ENCODE measurements at regions of chr11 and their contacts with region 1.

Region 1: DNA sequence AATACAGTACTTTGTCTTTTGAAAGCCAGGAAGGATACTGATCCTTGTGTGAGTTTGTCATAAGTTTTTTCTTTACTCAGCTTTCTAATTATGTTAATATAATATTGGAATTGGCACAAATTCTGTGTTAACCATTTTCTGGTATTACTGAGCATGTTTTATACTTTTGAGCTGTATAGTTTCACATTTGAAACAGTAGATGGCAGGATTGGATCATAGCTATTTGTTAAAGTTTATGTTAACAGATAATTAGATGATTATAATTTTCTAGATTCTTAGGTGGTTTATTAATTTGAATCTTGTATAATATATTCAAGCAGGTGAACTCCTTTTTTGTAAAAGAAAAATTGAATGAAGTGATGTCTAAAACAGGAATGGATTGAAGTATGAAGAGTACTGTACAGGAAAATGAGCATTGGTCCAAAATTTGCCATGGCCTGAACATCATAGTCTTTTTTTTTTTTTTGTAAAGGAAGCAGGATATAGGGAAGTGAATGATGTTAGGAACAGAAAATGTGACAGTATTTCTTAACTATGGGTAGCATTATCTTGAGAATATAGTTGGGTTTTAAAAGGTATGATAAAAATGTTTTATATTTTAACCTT is 102.0 kb downstream of the CYP2R1 start:
- DNase-seq: peak in 1 of 2 experiments; percentile 4
- H3K4me3 ChIP-seq: no peak overlapping the region
- H3K4me3 Mint-ChIP-seq: no peak overlapping the region
- H3K27ac Mint-ChIP-seq: no peak overlapping the region
- H3K4me1 ChIP-seq: no peaks in the 10 kb centered on the region
- H3K4me1 Mint-ChIP-seq: peaks cover 7% of the 10 kb centered on the region
- H3K27me3 ChIP-seq: no peaks in the 10 kb centered on the region
- H3K27me3 Mint-ChIP-seq: no peaks in the 10 kb centered on the region
- CTCF ChIP-seq: peak in 1 of 2 experiments; percentile 29

Region 2: DNA sequence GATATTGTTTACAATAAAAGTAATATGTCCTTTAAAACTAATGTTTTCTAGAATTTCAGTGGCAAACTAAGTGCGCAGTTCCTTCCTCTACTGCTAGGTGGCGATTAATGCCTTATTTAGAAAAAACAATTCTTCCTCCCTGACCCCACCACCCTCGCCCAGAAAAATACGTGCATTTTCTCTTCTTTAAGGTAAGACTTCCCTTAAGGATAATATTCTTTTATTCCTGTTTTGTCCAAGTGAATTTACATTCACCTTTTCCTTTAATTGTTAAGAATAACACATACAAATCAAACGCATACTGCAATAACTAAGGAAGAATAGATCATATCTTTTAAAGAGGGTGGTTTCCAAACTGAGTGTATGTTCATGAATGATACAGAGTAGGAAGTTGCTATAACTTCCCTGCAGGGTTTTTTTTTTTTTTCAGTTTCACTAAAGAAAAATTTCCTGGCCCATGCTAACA is 252.8 kb before region 1 on chr11:
- CTCF ChIA-PET with region 1: no interaction called
- POLR2A ChIA-PET with region 1: no interaction called
- intact Hi-C with region 1: loop called (anchors 5 kb)
- DNase-seq: peak in 1 of 2 experiments; percentile 47
- H3K4me3 ChIP-seq: no peak overlapping the region
- H3K4me3 Mint-ChIP-seq: no peak overlapping the region
- H3K27ac Mint-ChIP-seq: no peak overlapping the region
- H3K4me1 ChIP-seq: no peaks in the 10 kb centered on the region
- H3K4me1 Mint-ChIP-seq: no peaks in the 10 kb centered on the region
- H3K27me3 ChIP-seq: no peaks in the 10 kb centered on the region
- H3K27me3 Mint-ChIP-seq: no peaks in the 10 kb centered on the region
- CTCF ChIP-seq: peak; percentile 66 to 79

Region 3: GRCh38 chr11:14756349-14756748 is 33.6 kb before region 1 on chr11:
- CTCF ChIA-PET with region 1: no interaction called
- POLR2A ChIA-PET with region 1: no interaction called
- intact Hi-C with region 1: no loop called
- DNase-seq: no peak
- H3K4me3 ChIP-seq: no peak overlapping the region
- H3K4me3 Mint-ChIP-seq: no peak overlapping the region
- H3K27ac Mint-ChIP-seq: no peak overlapping the region
- H3K4me1 ChIP-seq: peaks cover 10% of the 10 kb centered on the region
- H3K4me1 Mint-ChIP-seq: peaks cover 7% of the 10 kb centered on the region
- H3K27me3 ChIP-seq: no peaks in the 10 kb centered on the region
- H3K27me3 Mint-ChIP-seq: no peaks in the 10 kb centered on the region
- CTCF ChIP-seq: no peak

Region 4: GRCh38 chr11:14809466-14809865 is 19.5 kb after region 1 on chr11:
- CTCF ChIA-PET with region 1: no interaction called
- POLR2A ChIA-PET with region 1: no interaction called
- intact Hi-C with region 1: no loop called
- DNase-seq: no peak
- H3K4me3 ChIP-seq: no peak overlapping the region
- H3K4me3 Mint-ChIP-seq: no peak overlapping the region
- H3K27ac Mint-ChIP-seq: no peak overlapping the region
- H3K4me1 ChIP-seq: no peaks in the 10 kb centered on the region
- H3K4me1 Mint-ChIP-seq: no peaks in the 10 kb centered on the region
- H3K27me3 ChIP-seq: no peaks in the 10 kb centered on the region
- H3K27me3 Mint-ChIP-seq: no peaks in the 10 kb centered on the region
- CTCF ChIP-seq: no peak

Region 5: DNA sequence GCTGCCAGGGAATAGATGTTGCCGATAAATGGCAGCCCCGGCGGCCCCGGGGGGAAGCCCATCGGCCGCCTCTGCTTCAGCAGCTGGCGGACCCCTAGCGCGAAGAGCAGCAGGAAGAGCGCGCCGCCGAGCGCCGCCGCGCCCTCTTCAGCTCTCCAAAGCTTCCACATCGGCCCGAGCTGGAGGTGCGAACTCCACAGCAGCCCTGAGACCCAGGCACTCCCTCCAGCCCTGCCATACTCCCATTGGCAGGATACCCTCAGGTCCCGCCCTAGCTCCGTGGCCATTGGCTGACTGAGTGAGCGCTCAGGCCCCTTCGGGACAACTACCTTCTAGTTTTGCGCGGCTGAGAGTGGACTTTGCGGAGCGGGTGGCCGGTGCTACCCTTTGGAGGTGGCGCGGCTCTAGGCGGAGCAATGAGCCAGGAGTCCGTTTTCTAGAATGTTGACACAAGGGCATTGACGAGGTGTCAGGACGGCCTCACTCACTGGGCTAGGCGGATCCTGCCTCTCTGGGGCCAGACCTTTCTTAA is 102.1 kb after region 1 on chr11 and contains the start of gene CYP2R1:
- CTCF ChIA-PET with region 1: interaction called, 14 read pairs
- POLR2A ChIA-PET with region 1: no interaction called
- intact Hi-C with region 1: loop called (anchors 5 kb)
- DNase-seq: peak; percentile 99
- H3K4me3 ChIP-seq: peak within 1 kb of the TSS; percentile 78
- H3K4me3 Mint-ChIP-seq: peak within 1 kb of the TSS; percentile 99
- H3K27ac Mint-ChIP-seq: peak within 1 kb of the TSS; percentile 88
- H3K4me1 ChIP-seq: peaks cover 27% of the 10 kb centered on the region
- H3K4me1 Mint-ChIP-seq: peaks cover 26% of the 10 kb centered on the region
- H3K27me3 ChIP-seq: no peaks in the 10 kb centered on the region
- H3K27me3 Mint-ChIP-seq: no peaks in the 10 kb centered on the region
- CTCF ChIP-seq: no peak
- total RNA-seq, gene CYP2R1: 33.0 and 34.5 TPM in 2 replicates

Region 6: GRCh38 chr11:15006139-15006759 is 216.3 kb after region 1 on chr11:
- CTCF ChIA-PET with region 1: interaction called, 19 read pairs
- POLR2A ChIA-PET with region 1: no interaction called
- intact Hi-C with region 1: loop called (anchors 2 kb)
- DNase-seq: peak in 1 of 2 experiments; percentile 30
- H3K4me3 ChIP-seq: no peak overlapping the region
- H3K4me3 Mint-ChIP-seq: no peak overlapping the region
- H3K27ac Mint-ChIP-seq: no peak overlapping the region
- H3K4me1 ChIP-seq: no peaks in the 10 kb centered on the region
- H3K4me1 Mint-ChIP-seq: no peaks in the 10 kb centered on the region
- H3K27me3 ChIP-seq: no peaks in the 10 kb centered on the region; the same call in 1 of the 2 replicates
- H3K27me3 Mint-ChIP-seq: peaks cover 18% of the 10 kb centered on the region
- CTCF ChIP-seq: peak; percentile 58 to 62

Region 7: GRCh38 chr11:15074206-15075161 is 284.5 kb after region 1 on chr11:
- CTCF ChIA-PET with region 1: interaction called, 4 read pairs
- POLR2A ChIA-PET with region 1: no interaction called
- intact Hi-C with region 1: loop called (anchors 2 kb)
- DNase-seq: peak; percentile 83 to 86
- H3K4me3 ChIP-seq: no peak overlapping the region
- H3K4me3 Mint-ChIP-seq: peak overlapping the region; percentile 67
- H3K27ac Mint-ChIP-seq: no peak overlapping the region
- H3K4me1 ChIP-seq: no peaks in the 10 kb centered on the region
- H3K4me1 Mint-ChIP-seq: no peaks in the 10 kb centered on the region
- H3K27me3 ChIP-seq: peaks cover 1% of the 10 kb centered on the region; the same call in 1 of the 2 replicates
- H3K27me3 Mint-ChIP-seq: peaks cover 15% of the 10 kb centered on the region
- CTCF ChIP-seq: peak; percentile 82 to 86

Region 8: GRCh38 chr11:15208378-15209222 is 418.6 kb after region 1 on chr11:
- CTCF ChIA-PET with region 1: no interaction called
- POLR2A ChIA-PET with region 1: no interaction called
- intact Hi-C with region 1: loop called (anchors 10 kb)
- DNase-seq: peak; percentile 71 to 87
- H3K4me3 ChIP-seq: no peak overlapping the region
- H3K4me3 Mint-ChIP-seq: no peak overlapping the region
- H3K27ac Mint-ChIP-seq: no peak overlapping the region
- H3K4me1 ChIP-seq: no peaks in the 10 kb centered on the region
- H3K4me1 Mint-ChIP-seq: peaks cover 3% of the 10 kb centered on the region
- H3K27me3 ChIP-seq: no peaks in the 10 kb centered on the region
- H3K27me3 Mint-ChIP-seq: peaks cover 7% of the 10 kb centered on the region
- CTCF ChIP-seq: peak; percentile 92 to 96

Measured in Caco-2 (cell line).